Transverse colon (tissue), 4 donors: ENCODE measurements at regions of chr21 and their contacts with region 1.

Region 1: DNA sequence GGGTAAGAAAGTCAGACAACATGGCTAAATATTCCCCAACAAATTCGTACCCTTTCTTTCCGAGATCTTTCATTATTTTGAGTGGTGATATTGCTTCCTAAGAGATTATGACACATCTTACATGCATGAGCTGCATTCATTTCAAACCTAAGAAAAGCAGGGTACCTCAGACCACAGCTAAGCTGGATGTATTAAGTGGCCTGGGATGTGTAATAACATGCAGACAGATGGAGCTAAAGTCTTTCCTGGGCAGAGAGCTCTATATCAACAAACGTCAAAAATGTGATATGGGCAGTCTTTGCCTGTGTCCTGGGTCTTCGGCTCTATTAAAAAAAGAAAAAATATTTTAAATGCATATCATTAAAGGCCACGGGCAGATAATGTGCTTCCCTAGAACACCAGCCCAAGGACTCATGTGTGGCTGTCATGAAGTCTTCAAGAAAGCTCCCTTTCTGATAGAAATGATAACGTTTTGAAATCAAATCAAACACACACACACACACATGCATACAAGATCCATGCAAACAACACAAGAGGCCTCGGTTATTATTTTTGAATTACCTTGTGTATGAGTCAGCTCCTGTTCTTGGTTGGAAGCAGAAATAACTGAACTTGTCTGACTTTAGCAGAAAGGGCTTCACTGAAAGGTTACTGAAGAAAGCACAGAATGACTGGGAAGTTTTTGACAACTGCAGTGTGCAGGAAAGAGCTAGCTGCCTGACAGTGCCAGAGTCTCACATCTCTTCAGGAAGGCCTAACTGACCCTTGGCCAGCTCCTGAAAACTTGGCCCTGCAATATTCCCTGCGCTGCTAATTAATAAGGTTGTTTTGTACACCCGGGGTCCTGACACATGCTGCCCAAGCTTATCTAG is 231.2 kb downstream of the DSCAM start:
- DNase-seq: no peak
- H3K4me3 ChIP-seq: no peak overlapping the region
- H3K27ac ChIP-seq: no peak overlapping the region
- H3K4me1 ChIP-seq: no peaks in the 10 kb centered on the region
- H3K27me3 ChIP-seq: no peaks in the 10 kb centered on the region
- CTCF ChIP-seq: no peak
- EP300 ChIP-seq: no peak
- POLR2A ChIP-seq: no peak

Region 2: GRCh38 chr21:40602080-40602479 is 13.7 kb before region 1 on chr21:
- in situ Hi-C with region 1: no loop called
- intact Hi-C with region 1: loop called (anchors 2 kb)
- DNase-seq: no peak
- H3K4me3 ChIP-seq: no peak overlapping the region
- H3K27ac ChIP-seq: no peak overlapping the region
- H3K4me1 ChIP-seq: no peaks in the 10 kb centered on the region
- H3K27me3 ChIP-seq: no peaks in the 10 kb centered on the region
- CTCF ChIP-seq: no peak
- EP300 ChIP-seq: no peak
- POLR2A ChIP-seq: no peak